AG04449 (cell line): ENCODE measurements at regions of chr6 and their contacts with region 1.

Region 1: GRCh38 chr6:141562851-141563763 is 569.6 kb upstream of the GJE1 start:
- DNase-seq: peak; percentile 65
- H3K4me3 ChIP-seq: no peak overlapping the region
- CTCF ChIP-seq: peak; percentile 62

Region 2: DNA sequence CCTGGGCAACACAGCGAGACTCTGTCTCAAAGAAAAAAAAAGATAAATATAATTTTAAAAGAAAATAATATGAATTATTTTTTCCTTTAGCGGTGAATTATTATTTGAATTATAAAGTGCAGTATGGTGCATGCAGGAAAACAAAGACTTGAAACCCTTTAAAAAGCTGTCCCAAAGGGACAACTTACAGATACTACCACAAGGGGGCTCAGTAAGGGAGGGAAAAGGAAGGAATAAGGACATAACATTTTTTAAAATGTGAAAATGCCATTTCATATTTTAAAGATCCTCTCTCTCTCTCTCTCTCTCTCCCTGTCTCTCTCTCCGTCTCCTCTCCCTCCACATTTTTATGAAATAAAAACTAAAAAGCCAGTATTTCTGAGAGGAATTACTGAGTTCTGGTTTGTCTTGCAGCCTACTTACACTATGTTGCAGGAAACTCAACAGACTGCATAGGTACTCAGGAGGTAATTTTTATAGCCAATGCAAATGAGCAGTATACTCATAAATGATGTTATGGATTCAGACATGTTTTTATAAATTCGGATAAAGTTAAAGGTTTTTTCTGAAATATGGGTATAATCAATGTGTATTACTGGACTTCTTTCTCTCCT is 114.6 kb after region 1 on chr6:
- CTCF ChIA-PET with region 1: interaction called, 10 read pairs
- POLR2A ChIA-PET with region 1: no interaction called
- DNase-seq: no peak
- H3K4me3 ChIP-seq: no peak overlapping the region
- CTCF ChIP-seq: peak; percentile 50